Left lung (tissue), 14 donors: ENCODE measurements at regions of chr2 and their contacts with region 1.

Region 1: DNA sequence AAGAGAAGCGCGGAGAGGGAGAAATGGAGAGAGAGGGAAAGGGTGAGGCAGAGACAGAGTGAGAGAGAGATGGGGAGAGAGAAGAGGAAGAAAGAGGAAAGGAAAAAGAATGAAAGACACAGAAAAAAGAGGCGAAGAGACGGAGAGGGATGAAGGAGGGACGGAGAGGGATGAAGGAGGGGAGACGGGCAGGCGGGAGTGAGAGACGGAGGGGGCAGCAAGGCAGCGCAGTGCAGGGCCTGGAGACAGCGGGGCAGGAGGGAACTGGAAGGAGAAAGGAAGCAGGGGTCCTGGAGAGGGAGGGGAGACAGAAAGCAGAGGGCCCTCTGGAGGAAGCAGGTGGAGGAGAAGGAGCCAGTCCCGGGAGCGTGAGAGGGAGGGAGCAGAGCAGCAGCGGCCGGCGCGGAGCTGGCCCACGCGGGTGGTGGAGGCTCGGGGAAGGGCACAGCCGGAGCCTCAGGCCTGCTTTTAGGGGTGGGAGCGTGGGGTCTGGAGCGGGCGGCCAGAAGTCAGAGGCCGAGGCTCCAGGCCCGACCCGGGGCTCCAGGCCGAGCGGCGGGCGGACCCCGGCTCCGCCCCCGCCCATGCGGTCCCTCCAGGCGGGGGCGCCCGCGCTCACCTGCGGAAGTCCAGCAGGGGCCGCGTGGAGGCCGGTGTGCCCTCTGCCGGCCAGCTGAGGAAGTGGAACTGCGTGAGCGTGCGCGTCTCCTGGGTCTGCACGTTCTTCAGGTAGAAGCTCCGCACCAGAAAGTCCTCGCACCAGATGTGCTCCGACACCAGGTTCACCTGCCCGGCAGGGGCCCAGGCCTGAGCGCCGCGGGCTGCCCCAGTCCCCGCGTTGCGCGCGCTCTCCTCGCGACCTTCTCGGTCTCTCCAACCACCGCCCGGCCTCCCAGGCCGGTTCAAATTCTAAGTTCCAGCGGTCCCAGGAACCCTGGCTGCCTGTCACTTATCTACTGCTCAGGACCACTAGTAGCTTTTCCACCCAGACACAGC is 14.5 kb downstream of the PTPRN start:
- DNase-seq: peak; percentile 80 to 99 (median 90)
- ATAC-seq: peak; percentile 98
- H3K4me3 ChIP-seq: peak overlapping the region; percentile 48 to 55
- H3K27ac ChIP-seq: peak overlapping the region in 1 of 2 donors; percentile 37
- H3K4me1 ChIP-seq: peaks cover 0 to 18% of the 10 kb centered on the region in 2 donors
- H3K27me3 ChIP-seq: peaks cover 0 to 25% of the 10 kb centered on the region in 2 donors
- CTCF ChIP-seq: peak; percentile 99

Region 2: DNA sequence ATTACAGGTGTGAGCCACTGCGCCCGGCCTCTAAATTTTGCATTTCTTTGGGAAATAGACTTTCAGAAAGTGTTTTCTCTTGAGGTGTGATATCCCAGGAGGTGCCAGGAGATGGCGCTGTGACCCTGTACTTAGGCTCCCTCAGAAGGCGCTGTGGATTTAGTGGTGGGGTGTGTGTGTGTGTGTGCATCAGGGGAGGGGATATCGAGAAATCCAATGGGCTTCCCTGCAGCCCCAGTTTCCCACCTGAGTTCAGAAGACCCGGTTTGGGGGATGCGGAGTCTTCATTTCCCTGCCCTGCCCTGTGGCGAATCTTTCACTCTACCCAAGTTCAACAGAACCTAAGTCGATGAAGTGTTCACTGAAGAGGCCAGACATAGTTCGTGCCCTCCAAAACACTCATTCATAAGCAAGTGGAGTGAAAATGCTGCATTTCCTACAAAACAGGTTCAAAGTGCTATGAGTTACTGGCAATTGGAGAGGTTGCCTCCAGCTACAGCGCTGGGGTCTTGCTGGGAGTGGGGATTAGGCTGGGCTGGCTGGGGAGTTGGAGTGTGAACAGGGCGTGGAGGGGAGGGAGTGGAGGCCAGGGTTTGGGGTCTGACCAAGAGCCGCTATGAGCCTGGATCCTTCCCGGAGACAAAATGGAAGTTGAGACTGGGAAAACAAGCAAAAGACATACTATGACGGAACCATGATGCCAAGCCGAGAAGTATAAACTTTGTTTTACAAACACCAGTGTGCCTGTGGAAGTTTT is 441.6 kb before region 1 on chr2:
- intact Hi-C with region 1: no loop called
- DNase-seq: peak in 1 of 4 donors; percentile 68
- ATAC-seq: peak; percentile 89
- H3K4me3 ChIP-seq: no peak overlapping the region
- H3K27ac ChIP-seq: no peak overlapping the region
- H3K4me1 ChIP-seq: no peaks in the 10 kb centered on the region
- H3K27me3 ChIP-seq: peaks cover 19 to 98% of the 10 kb centered on the region in 2 donors
- CTCF ChIP-seq: peak; percentile 57 to 66

Region 3: DNA sequence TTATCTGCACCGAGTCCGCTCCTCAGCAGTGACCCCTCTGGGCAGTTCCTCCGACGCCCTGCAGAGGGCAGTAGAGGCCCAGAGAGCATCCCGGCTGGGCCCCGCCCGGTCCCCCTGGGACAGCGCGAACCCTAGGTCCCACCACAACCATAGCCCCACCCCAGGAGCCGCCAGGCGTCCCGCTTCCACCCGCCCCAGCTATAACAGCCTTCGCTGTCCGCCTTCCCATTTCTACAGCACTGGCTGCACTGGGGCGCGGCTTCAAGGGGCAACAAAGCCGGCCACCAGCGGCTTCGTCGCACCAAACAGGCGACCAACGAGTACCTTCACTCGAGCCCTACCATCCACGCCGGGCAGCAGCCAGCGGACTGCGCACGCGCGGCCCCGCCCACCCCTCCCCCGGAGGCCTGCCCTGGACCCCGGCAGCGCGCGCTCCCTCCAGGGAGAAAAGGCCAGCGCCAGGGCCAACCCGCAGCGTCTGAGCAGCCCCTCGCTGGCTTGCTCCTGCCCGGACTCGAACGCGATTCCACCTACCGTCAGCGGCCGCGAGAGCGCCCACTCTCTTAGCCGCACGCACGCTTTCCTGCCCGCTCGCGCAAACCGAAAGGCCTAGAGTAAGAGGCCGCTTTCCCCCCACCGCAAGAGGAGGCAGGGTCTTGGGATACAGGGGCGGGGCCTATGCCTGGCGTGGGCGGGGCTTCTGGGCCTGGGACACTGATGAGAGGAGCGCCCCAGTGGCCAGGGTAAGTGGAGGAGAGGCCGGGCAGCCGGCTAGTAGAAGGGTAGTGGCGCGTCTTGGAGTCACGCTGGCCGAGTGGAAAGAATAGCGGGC is 134.3 kb before region 1 on chr2 and contains the start of gene NHEJ1:
- intact Hi-C with region 1: loop called in 1 of 2 experiments (anchors 10 kb)
- DNase-seq: peak; percentile 94 to 99 (median 96)
- ATAC-seq: peak; percentile 98
- H3K4me3 ChIP-seq: peak within 1 kb of the TSS; percentile 54 to 73
- H3K27ac ChIP-seq: peak within 1 kb of the TSS; percentile 93
- H3K4me1 ChIP-seq: peaks cover 4 to 12% of the 10 kb centered on the region in 2 donors
- H3K27me3 ChIP-seq: no peaks in the 10 kb centered on the region
- CTCF ChIP-seq: peak; percentile 99
- polyA plus RNA-seq, gene NHEJ1: 16.3 to 20.9 (median 18.8) TPM

Region 4: DNA sequence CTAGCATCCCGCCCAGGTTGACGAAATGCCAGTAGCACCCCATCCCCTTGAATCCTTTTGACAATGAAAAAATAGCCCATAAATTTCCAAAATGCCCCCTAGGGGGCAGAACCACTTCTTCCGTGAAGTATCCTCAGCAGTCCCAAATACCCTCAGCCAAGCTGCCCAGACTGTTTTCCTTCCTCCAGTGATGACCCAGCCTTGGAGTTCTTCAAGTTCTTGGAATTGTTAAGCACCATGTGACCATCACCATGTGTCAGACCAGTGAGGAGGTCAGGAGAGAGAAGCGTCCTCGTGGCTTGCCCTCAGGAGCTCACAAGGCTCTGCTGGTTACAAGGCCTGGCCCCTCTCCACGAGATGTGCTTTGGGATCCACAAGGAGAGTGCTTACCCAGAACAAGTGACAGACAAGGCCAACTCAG is 123.4 kb before region 1 on chr2:
- intact Hi-C with region 1: loop called (anchors 5 to 10 kb)
- DNase-seq: peak in 2 of 4 donors; percentile 14 to 37
- ATAC-seq: peak; percentile 77
- H3K4me3 ChIP-seq: no peak overlapping the region
- H3K27ac ChIP-seq: peak overlapping the region; percentile 10 to 51
- H3K4me1 ChIP-seq: peaks cover 10 to 31% of the 10 kb centered on the region in 2 donors
- H3K27me3 ChIP-seq: no peaks in the 10 kb centered on the region
- CTCF ChIP-seq: peak; percentile 59 to 72

Region 5: DNA sequence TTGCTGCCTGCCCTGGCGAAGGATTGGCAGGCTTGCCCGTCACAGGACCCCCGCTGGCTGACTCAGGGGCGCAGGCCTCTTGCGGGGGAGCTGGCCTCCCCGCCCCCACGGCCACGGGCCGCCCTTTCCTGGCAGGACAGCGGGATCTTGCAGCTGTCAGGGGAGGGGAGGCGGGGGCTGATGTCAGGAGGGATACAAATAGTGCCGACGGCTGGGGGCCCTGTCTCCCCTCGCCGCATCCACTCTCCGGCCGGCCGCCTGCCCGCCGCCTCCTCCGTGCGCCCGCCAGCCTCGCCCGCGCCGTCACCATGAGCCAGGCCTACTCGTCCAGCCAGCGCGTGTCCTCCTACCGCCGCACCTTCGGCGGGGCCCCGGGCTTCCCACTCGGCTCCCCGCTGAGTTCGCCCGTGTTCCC is 123.5 kb after region 1 on chr2 and contains the start of gene DES:
- intact Hi-C with region 1: no loop called
- DNase-seq: peak in 1 of 4 donors; percentile 54
- ATAC-seq: peak; percentile 45
- H3K4me3 ChIP-seq: no peak within 1 kb of the TSS
- H3K27ac ChIP-seq: no peak within 1 kb of the TSS
- H3K4me1 ChIP-seq: peaks cover 0 to 14% of the 10 kb centered on the region in 2 donors
- H3K27me3 ChIP-seq: peaks cover 14 to 77% of the 10 kb centered on the region in 2 donors
- CTCF ChIP-seq: no peak
- polyA plus RNA-seq, gene DES: 8.7 to 31.3 (median 23.8) TPM